Endothelial cell of umbilical vein (primary cell): ENCODE measurements at regions of chr13 and their contacts with region 1.

Region 1: GRCh38 chr13:51825165-51825592 is 19.8 kb downstream of the TMEM272 start:
- DNase-seq: peak; percentile 24
- H3K4me3 ChIP-seq: no peak overlapping the region
- H3K27ac ChIP-seq: no peak overlapping the region
- H3K4me1 ChIP-seq: no peaks in the 10 kb centered on the region
- H3K27me3 ChIP-seq: peaks cover 4 to 8% of the 10 kb centered on the region in 2 experiments
- CTCF ChIP-seq: no peak
- POLR2A ChIP-seq: no peak

Region 2: DNA sequence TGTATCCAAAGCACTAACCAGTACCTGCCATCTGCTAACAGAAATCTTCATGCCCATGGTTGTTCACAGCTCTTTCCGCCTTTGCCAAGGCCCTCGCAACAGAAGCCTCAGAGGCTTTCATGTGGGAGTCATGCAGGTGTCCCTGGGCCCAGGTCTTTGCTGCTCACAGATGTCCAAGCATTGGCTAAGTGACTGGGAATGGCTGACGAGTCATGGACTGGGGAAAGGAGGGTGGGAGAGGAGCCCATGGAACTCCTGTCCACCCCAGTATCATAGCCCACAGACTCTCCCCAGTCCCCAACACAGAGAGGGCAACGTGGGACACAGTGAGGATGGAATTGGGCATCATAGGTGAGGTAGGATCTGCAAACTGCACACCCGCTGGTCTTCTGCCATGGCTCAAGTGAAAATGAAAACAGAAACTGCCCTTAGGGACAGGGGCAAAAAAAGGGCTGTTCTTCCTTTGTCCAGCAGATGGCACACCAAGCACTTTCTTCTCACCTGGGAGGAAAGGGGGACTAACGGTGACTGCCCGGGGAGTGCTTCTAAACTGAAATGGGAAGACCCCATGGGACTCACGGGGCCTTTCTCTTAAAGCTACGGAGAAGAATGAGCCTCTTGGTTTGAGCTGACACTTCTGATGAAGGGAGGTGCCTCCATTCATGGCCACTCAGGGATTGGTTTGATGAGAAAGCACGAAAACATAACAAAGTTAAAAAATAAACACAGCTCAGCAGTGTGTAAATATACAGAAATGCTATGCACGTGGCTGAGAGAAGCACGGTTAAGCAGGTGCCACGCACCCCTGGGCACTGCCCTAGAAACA is 10.1 kb before region 1 on chr13:
- CTCF ChIA-PET with region 1: interaction called, 19 read pairs
- POLR2A ChIA-PET with region 1: no interaction called
- dilution Hi-C with region 1: no loop called
- intact Hi-C with region 1: no loop called
- DNase-seq: peak; percentile 63
- H3K4me3 ChIP-seq: peak overlapping the region in 1 of 3 experiments; percentile 23
- H3K27ac ChIP-seq: no peak overlapping the region
- H3K4me1 ChIP-seq: peaks cover 6% of the 10 kb centered on the region
- H3K27me3 ChIP-seq: peaks cover 9 to 22% of the 10 kb centered on the region in 2 experiments
- CTCF ChIP-seq: peak; percentile 74 to 82
- POLR2A ChIP-seq: no peak